Calu3 (cell line): ENCODE measurements at regions of chr1 and their contacts with region 1.

Region 1: GRCh38 chr1:171313835-171314320 is at the start of gene FMO4:
- DNase-seq: peak; percentile 93
- H3K4me3 Mint-ChIP-seq: peak within 1 kb of the TSS; percentile 58
- H3K27ac Mint-ChIP-seq: peak within 1 kb of the TSS; percentile 85
- H3K4me1 Mint-ChIP-seq: no peaks in the 10 kb centered on the region
- H3K27me3 Mint-ChIP-seq: no peaks in the 10 kb centered on the region
- CTCF ChIP-seq: peak; percentile 79
- total RNA-seq, gene FMO4: 2.5 and 3.4 TPM in 2 replicates

Region 2: GRCh38 chr1:169893494-169894362 is 1420.2 kb before region 1 on chr1 and contains the start of gene SCYL3:
- CTCF ChIA-PET with region 1: no interaction called
- intact Hi-C with region 1: loop called (anchors 10 kb)
- DNase-seq: peak; percentile 93
- H3K4me3 Mint-ChIP-seq: peak within 1 kb of the TSS; percentile 86
- H3K27ac Mint-ChIP-seq: peak within 1 kb of the TSS; percentile 100
- H3K4me1 Mint-ChIP-seq: peaks cover 49% of the 10 kb centered on the region
- H3K27me3 Mint-ChIP-seq: no peaks in the 10 kb centered on the region
- CTCF ChIP-seq: no peak
- total RNA-seq, gene SCYL3: 17.9 and 18.3 TPM in 2 replicates

Region 3: GRCh38 chr1:170872663-170873062 is 441.2 kb before region 1 on chr1:
- CTCF ChIA-PET with region 1: no interaction called
- intact Hi-C with region 1: no loop called
- DNase-seq: no peak
- H3K4me3 Mint-ChIP-seq: no peak overlapping the region
- H3K27ac Mint-ChIP-seq: no peak overlapping the region
- H3K4me1 Mint-ChIP-seq: peaks cover 10% of the 10 kb centered on the region
- H3K27me3 Mint-ChIP-seq: no peaks in the 10 kb centered on the region
- CTCF ChIP-seq: no peak

Region 4: DNA sequence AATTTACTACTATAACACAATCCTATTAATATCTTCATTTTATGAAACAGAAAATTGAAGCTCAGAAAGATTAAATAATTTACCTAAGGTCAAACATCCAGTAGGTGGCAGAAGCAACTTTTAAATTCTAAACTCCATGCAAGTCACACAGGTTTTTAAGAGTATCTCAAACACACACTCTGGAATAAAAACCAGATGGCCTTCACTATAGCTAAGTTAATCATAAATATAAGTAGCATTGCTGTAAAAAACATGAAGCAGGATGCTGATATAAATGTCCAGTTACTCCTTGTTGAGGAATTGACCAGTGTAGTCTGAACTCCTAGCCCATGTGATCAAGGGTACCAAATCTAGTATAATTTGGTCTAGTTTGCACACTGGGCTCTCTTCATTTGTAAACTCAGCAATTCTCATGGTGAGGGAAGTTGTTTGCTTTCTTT is 232.5 kb before region 1 on chr1:
- CTCF ChIA-PET with region 1: interaction called, 20 read pairs
- intact Hi-C with region 1: loop called (anchors 1 kb)
- DNase-seq: no peak
- H3K4me3 Mint-ChIP-seq: no peak overlapping the region
- H3K27ac Mint-ChIP-seq: no peak overlapping the region
- H3K4me1 Mint-ChIP-seq: no peaks in the 10 kb centered on the region
- H3K27me3 Mint-ChIP-seq: peaks cover 14% of the 10 kb centered on the region
- CTCF ChIP-seq: no peak

Region 5: GRCh38 chr1:171233190-171233589 is 80.7 kb before region 1 on chr1:
- CTCF ChIA-PET with region 1: no interaction called
- intact Hi-C with region 1: no loop called
- DNase-seq: no peak
- H3K4me3 Mint-ChIP-seq: no peak overlapping the region
- H3K27ac Mint-ChIP-seq: no peak overlapping the region
- H3K4me1 Mint-ChIP-seq: no peaks in the 10 kb centered on the region
- H3K27me3 Mint-ChIP-seq: peaks cover 6% of the 10 kb centered on the region
- CTCF ChIP-seq: no peak

Region 6: GRCh38 chr1:171245458-171246064 is 68.3 kb before region 1 on chr1:
- CTCF ChIA-PET with region 1: interaction called, 46 read pairs
- intact Hi-C with region 1: loop called (anchors 1 kb)
- DNase-seq: peak; percentile 59
- H3K4me3 Mint-ChIP-seq: no peak overlapping the region
- H3K27ac Mint-ChIP-seq: no peak overlapping the region
- H3K4me1 Mint-ChIP-seq: no peaks in the 10 kb centered on the region
- H3K27me3 Mint-ChIP-seq: peaks cover 42% of the 10 kb centered on the region
- CTCF ChIP-seq: peak; percentile 62

Region 7: DNA sequence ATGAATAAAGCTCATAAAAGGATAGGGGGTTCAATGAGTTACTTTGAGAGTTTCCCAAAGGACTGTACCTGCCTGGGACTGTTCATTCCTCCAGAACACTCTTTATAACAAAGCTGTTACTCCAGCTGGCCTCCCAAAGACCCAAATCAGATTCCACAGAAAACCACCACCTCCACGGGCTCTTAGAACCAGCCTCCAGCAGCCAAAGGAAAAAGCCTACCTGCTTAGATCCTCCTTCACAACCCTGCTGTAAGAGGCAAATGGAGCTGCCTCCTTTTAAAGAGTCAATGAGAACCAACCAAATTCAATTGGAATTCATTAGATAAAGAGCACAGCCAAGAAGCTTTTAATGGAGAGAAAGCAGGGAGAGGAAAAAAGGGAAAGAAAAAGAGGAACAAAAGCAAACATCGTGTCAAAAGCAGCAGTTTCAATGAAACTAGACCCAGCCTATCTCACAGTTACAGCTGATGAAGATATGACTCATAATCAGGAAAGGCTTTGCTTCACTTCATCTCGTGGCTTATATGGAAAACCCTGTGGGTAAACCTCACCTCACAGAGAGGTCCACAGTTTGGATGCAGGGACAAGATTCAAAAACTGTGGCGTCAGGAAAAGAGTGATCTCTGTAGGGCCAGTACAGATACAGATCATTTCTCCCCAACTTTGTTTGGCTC is 27.7 kb before region 1 on chr1:
- CTCF ChIA-PET with region 1: interaction called, 13 read pairs
- intact Hi-C with region 1: no loop called
- DNase-seq: no peak
- H3K4me3 Mint-ChIP-seq: no peak overlapping the region
- H3K27ac Mint-ChIP-seq: peak overlapping the region; percentile 13
- H3K4me1 Mint-ChIP-seq: peaks cover 15% of the 10 kb centered on the region
- H3K27me3 Mint-ChIP-seq: no peaks in the 10 kb centered on the region
- CTCF ChIP-seq: no peak